Naive thymus-derived CD4-positive, alpha-beta T cell (primary cell): ENCODE measurements at regions of chr3 and their contacts with region 1.

Region 1: DNA sequence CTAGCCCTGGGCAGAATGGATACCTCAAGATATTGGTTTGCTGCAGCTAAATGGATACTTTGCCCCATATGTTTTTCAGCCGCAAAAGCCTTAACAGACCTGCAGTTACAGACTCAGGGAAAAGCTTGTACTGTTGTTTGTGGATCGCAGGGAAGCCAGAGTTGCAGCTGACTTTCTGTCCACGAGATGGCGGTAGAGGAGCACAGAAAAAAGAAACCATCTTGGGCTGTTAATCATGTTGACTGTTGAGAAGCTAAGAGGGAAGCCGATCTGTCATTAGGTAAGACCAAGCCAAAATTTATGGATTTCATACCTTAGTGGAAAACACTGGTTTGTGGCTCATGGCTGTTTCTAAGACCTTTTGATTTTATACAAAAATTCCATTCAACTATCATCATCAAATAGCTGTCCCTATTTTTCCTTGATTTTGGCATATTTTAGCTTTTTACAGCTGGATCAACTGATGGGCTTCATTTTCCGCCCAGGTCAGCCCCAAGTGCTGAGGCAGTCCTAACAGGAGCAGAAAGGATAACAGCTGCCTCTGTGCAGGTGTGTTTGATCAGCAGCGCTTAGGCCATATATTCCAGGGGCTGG is 205.7 kb upstream of the ZPLD1 start:
- DNase-seq: peak; percentile 49 to 80 (median 74)
- ATAC-seq: peak; percentile 89
- H3K4me3 ChIP-seq: no peak overlapping the region
- H3K4me3 Mint-ChIP-seq: no peak overlapping the region
- H3K27ac ChIP-seq: no peak overlapping the region
- H3K27ac Mint-ChIP-seq: no peak overlapping the region
- H3K4me1 ChIP-seq: peaks cover 0 to 6% of the 10 kb centered on the region in 2 donors
- H3K4me1 Mint-ChIP-seq: peaks cover 1 to 27% (median 14%) of the 10 kb centered on the region in 7 donors
- H3K27me3 ChIP-seq: no peaks in the 10 kb centered on the region
- H3K27me3 Mint-ChIP-seq: peaks cover 0 to 25% (median 0%) of the 10 kb centered on the region in 5 donors

Region 2: GRCh38 chr3:101803173-101803782 is 425.9 kb before region 1 on chr3:
- CTCF ChIA-PET with region 1: interaction called, 423 read pairs
- POLR2A ChIA-PET with region 1: interaction called, 8 read pairs
- intact Hi-C with region 1: loop called in 1 of 2 experiments (anchors 1 kb)
- DNase-seq: peak in 7 of 9 donors; percentile 59 to 78 (median 69)
- ATAC-seq: peak; percentile 100
- H3K4me3 ChIP-seq: no peak overlapping the region
- H3K4me3 Mint-ChIP-seq: peak overlapping the region in 6 of 10 donors; percentile 14 to 58 (median 29)
- H3K27ac ChIP-seq: peak overlapping the region; percentile 29
- H3K27ac Mint-ChIP-seq: peak overlapping the region; percentile 53 to 95 (median 68)
- H3K4me1 ChIP-seq: peaks cover 0 to 6% of the 10 kb centered on the region in 2 donors
- H3K4me1 Mint-ChIP-seq: peaks cover 10 to 67% (median 55%) of the 10 kb centered on the region in 7 donors
- H3K27me3 ChIP-seq: no peaks in the 10 kb centered on the region
- H3K27me3 Mint-ChIP-seq: no peaks in the 10 kb centered on the region

Region 3: DNA sequence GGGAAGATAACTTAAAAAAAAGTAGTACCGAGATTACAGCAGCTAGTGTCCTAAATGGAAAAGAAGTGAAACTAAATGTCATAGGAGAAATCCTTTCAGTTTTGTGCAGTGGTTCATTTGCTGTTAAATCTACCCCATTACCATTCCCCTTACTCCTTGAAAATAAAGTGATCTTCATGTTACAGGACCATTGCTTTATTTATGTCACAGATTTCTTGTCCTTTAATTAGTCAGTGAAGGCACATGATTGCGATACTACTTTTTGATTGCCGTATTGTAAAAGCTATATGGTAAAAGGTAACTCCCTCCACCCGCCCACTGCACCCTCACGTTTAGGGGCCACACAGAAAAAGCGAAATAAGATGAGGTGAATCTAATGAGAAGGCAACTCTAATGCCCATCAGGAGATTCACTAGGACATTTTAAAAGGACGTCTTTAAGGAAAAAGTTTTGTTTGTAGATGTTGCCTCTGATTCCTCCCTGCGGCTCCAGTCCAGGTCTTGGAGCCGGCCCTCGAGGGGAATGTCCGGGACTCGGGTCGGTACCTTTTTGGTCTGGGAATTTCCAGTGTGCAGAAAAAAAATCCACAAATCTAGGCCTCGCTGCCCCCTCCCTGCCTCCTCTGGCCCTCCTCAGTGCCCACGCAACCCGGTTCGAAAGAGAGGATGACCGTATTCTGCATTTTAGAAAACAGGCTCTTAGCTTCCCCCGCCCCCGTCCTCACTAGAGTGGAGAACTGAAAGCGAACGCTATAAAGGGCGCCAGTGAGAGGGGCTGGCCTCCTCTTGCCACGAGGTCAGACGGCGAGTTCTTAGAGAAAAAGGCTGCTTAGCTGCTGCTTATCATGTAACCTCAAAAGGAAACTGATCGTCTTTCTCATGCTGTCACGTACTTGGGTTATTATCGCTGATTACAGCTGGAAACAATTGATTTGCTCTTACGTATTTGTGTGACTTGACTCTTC is 401.7 kb before region 1 on chr3:
- CTCF ChIA-PET with region 1: interaction called, 19 read pairs
- POLR2A ChIA-PET with region 1: interaction called, 3 read pairs
- intact Hi-C with region 1: no loop called
- DNase-seq: peak; percentile 52 to 86 (median 73)
- ATAC-seq: peak; percentile 86
- H3K4me3 ChIP-seq: peak overlapping the region; percentile 66
- H3K4me3 Mint-ChIP-seq: peak overlapping the region; percentile 85 to 97 (median 95)
- H3K27ac ChIP-seq: peak overlapping the region; percentile 88
- H3K27ac Mint-ChIP-seq: peak overlapping the region; percentile 94 to 99 (median 97)
- H3K4me1 ChIP-seq: peaks cover 13 to 28% of the 10 kb centered on the region in 2 donors
- H3K4me1 Mint-ChIP-seq: peaks cover 31 to 76% (median 63%) of the 10 kb centered on the region in 7 donors
- H3K27me3 ChIP-seq: no peaks in the 10 kb centered on the region
- H3K27me3 Mint-ChIP-seq: no peaks in the 10 kb centered on the region

Region 4: GRCh38 chr3:101988591-101988990 is 240.6 kb before region 1 on chr3:
- CTCF ChIA-PET with region 1: no interaction called
- POLR2A ChIA-PET with region 1: no interaction called
- intact Hi-C with region 1: loop called in 1 of 2 experiments (anchors 10 kb)
- DNase-seq: no peak
- ATAC-seq: no peak
- H3K4me3 ChIP-seq: no peak overlapping the region
- H3K4me3 Mint-ChIP-seq: peak overlapping the region in 1 of 10 donors; percentile 15
- H3K27ac ChIP-seq: no peak overlapping the region
- H3K27ac Mint-ChIP-seq: peak overlapping the region in 1 of 9 donors; percentile 62
- H3K4me1 ChIP-seq: peaks cover 0 to 6% of the 10 kb centered on the region in 2 donors
- H3K4me1 Mint-ChIP-seq: peaks cover 4 to 32% (median 16%) of the 10 kb centered on the region in 7 donors
- H3K27me3 ChIP-seq: no peaks in the 10 kb centered on the region
- H3K27me3 Mint-ChIP-seq: peaks cover 0 to 20% (median 0%) of the 10 kb centered on the region in 5 donors

Region 5: GRCh38 chr3:102180291-102181039 is 48.7 kb before region 1 on chr3:
- CTCF ChIA-PET with region 1: interaction called, 10 read pairs
- POLR2A ChIA-PET with region 1: interaction called, 3 read pairs
- intact Hi-C with region 1: no loop called
- DNase-seq: peak in 6 of 9 donors; percentile 21 to 52 (median 40)
- ATAC-seq: peak; percentile 68
- H3K4me3 ChIP-seq: no peak overlapping the region
- H3K4me3 Mint-ChIP-seq: no peak overlapping the region
- H3K27ac ChIP-seq: peak overlapping the region; percentile 73
- H3K27ac Mint-ChIP-seq: no peak overlapping the region
- H3K4me1 ChIP-seq: peaks cover 0 to 18% of the 10 kb centered on the region in 2 donors
- H3K4me1 Mint-ChIP-seq: peaks cover 0 to 12% (median 5%) of the 10 kb centered on the region in 7 donors
- H3K27me3 ChIP-seq: no peaks in the 10 kb centered on the region
- H3K27me3 Mint-ChIP-seq: no peaks in the 10 kb centered on the region

Region 6: GRCh38 chr3:102258666-102259227 is 29.6 kb after region 1 on chr3:
- CTCF ChIA-PET with region 1: no interaction called
- POLR2A ChIA-PET with region 1: no interaction called
- intact Hi-C with region 1: no loop called
- DNase-seq: no peak
- ATAC-seq: no peak
- H3K4me3 ChIP-seq: no peak overlapping the region
- H3K4me3 Mint-ChIP-seq: no peak overlapping the region
- H3K27ac ChIP-seq: no peak overlapping the region
- H3K27ac Mint-ChIP-seq: no peak overlapping the region
- H3K4me1 ChIP-seq: no peaks in the 10 kb centered on the region
- H3K4me1 Mint-ChIP-seq: peaks cover 0 to 2% (median 0%) of the 10 kb centered on the region in 7 donors
- H3K27me3 ChIP-seq: no peaks in the 10 kb centered on the region
- H3K27me3 Mint-ChIP-seq: peaks cover 0 to 13% (median 6%) of the 10 kb centered on the region in 5 donors

Region 7: GRCh38 chr3:103672346-103672745 is 1443.2 kb after region 1 on chr3:
- CTCF ChIA-PET with region 1: no interaction called
- POLR2A ChIA-PET with region 1: no interaction called
- intact Hi-C with region 1: no loop called
- DNase-seq: no peak
- ATAC-seq: no peak
- H3K4me3 ChIP-seq: no peak overlapping the region
- H3K4me3 Mint-ChIP-seq: no peak overlapping the region
- H3K27ac ChIP-seq: no peak overlapping the region
- H3K27ac Mint-ChIP-seq: no peak overlapping the region
- H3K4me1 ChIP-seq: no peaks in the 10 kb centered on the region
- H3K4me1 Mint-ChIP-seq: no peaks in the 10 kb centered on the region
- H3K27me3 ChIP-seq: no peaks in the 10 kb centered on the region
- H3K27me3 Mint-ChIP-seq: no peaks in the 10 kb centered on the region